GM12878 (cell line): ENCODE measurements at regions of chr1 and their contacts with region 1.

Region 1: DNA sequence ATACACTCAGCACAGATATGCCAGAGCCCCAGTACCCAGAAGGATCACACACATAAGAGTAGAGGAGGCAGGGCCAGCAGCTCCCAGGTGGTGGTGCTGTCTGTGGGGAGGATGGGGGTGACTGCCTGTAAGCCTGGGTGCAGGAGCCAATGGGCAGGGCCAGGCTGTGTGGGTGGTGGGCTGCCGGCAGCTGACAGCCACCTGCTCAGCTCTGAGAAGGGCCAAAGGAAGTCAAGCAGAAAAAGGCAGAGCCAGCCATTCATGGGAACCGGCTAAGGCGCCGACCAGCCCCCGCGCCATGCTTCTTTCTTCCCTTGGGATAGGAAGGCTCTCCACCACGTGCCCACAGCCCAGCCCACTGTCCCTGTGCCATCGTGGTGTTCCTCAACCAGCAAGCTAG is 14.1 kb downstream of the PIK3C2B start:
- DNase-seq: no peak
- ATAC-seq: peak; percentile 81
- H3K4me3 ChIP-seq: no peak overlapping the region
- H3K27ac ChIP-seq: peak overlapping the region; percentile 84
- H3K4me1 ChIP-seq: peaks cover 45% of the 10 kb centered on the region
- H3K27me3 ChIP-seq: no peaks in the 10 kb centered on the region
- CTCF ChIP-seq: peak; percentile 20 to 24 (median 23); a peak in 2 of 6 replicates
- EP300 ChIP-seq: no peak; a peak in 1 of 4 replicates
- POLR2A ChIP-seq: no peak
- RAD21 ChIP-seq: peak; percentile 39; the same call in 1 of the 2 replicates

Region 2: GRCh38 chr1:203609979-203610493 is 870.5 kb before region 1 on chr1:
- CTCF ChIA-PET with region 1: no interaction called
- POLR2A ChIA-PET with region 1: no interaction called
- RAD21 ChIA-PET with region 1: no interaction called
- SMC1A ChIA-PET with region 1: no interaction called
- in situ Hi-C with region 1: no loop called
- intact Hi-C with region 1: no loop called
- DNase-seq: no peak
- ATAC-seq: no peak
- H3K4me3 ChIP-seq: no peak overlapping the region
- H3K27ac ChIP-seq: no peak overlapping the region
- H3K4me1 ChIP-seq: no peaks in the 10 kb centered on the region; the same call in 1 of the 2 replicates
- H3K27me3 ChIP-seq: no peaks in the 10 kb centered on the region
- CTCF ChIP-seq: no peak
- EP300 ChIP-seq: no peak
- POLR2A ChIP-seq: no peak
- RAD21 ChIP-seq: no peak

Region 3: DNA sequence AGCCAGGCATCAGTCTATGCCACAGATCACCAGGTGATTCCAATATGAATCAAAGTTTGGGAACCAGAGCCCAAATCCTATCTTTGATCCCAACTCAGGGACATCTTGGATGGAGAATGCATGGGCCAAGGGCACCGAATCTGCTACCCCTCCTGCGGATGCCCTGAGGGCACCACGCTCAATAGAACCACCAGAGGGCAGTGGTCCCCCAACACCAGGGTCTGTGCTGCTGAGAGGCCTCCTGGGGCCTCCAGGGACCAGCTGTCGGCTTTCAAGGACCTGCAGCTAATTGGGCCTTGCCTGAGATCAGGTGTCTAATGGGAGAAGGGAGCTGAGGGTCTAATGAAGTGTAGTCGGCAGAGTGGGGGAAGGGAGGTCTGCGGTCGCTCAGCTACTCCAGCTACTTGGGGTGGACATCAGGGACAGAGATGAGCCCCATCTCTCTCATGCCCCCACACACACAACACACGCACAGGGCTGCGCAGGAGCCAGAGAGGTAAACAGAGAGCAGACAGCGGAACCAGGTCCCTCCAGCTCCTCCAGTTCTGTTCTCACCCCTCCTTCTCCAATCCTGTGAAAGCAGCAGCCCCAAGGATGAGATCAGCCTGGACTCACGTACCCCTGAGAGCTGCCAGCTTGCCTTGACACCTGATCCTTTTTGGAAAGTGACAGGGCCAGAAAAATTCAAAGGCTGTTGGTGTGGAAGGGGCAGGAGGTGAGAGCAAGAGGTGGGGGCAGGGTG is 34.0 kb before region 1 on chr1:
- CTCF ChIA-PET with region 1: interaction called, 2,021 read pairs
- POLR2A ChIA-PET with region 1: interaction called, 15 read pairs
- RAD21 ChIA-PET with region 1: interaction called, 101 read pairs
- SMC1A ChIA-PET with region 1: interaction called, 112 read pairs
- in situ Hi-C with region 1: no loop called
- intact Hi-C with region 1: loop called (anchors 1 kb)
- DNase-seq: no peak
- ATAC-seq: peak; percentile 98
- H3K4me3 ChIP-seq: no peak overlapping the region
- H3K27ac ChIP-seq: no peak overlapping the region
- H3K4me1 ChIP-seq: peaks cover 5% of the 10 kb centered on the region
- H3K27me3 ChIP-seq: no peaks in the 10 kb centered on the region
- CTCF ChIP-seq: peak; percentile 80 to 92 (median 89); a peak in 5 of 6 replicates
- EP300 ChIP-seq: no peak
- POLR2A ChIP-seq: no peak
- RAD21 ChIP-seq: peak; percentile 99

Region 4: GRCh38 chr1:204453141-204453772 is 27.3 kb before region 1 on chr1:
- CTCF ChIA-PET with region 1: interaction called, 2,021 read pairs
- POLR2A ChIA-PET with region 1: interaction called, 15 read pairs
- RAD21 ChIA-PET with region 1: interaction called, 101 read pairs
- SMC1A ChIA-PET with region 1: interaction called, 112 read pairs
- in situ Hi-C with region 1: no loop called
- intact Hi-C with region 1: no loop called
- DNase-seq: peak; percentile 84
- ATAC-seq: peak; percentile 97
- H3K4me3 ChIP-seq: 0 out of 2 replicates have a peak overlapping the region, but pooled peaks have one; percentile 9
- H3K27ac ChIP-seq: peak overlapping the region; percentile 81
- H3K4me1 ChIP-seq: peaks cover 17% of the 10 kb centered on the region
- H3K27me3 ChIP-seq: no peaks in the 10 kb centered on the region
- CTCF ChIP-seq: no peak
- EP300 ChIP-seq: no peak; a peak in 1 of 4 replicates
- POLR2A ChIP-seq: no peak
- RAD21 ChIP-seq: no peak

Region 5: GRCh38 chr1:204494281-204495077 is 14.0 kb after region 1 on chr1 and contains the start of gene PIK3C2B:
- CTCF ChIA-PET with region 1: interaction called, 471 read pairs
- POLR2A ChIA-PET with region 1: interaction called, 81 read pairs
- RAD21 ChIA-PET with region 1: interaction called, 267 read pairs
- SMC1A ChIA-PET with region 1: interaction called, 408 read pairs
- in situ Hi-C with region 1: no loop called
- intact Hi-C with region 1: loop called (anchors 1 kb)
- DNase-seq: peak; percentile 55
- ATAC-seq: peak; percentile 92
- H3K4me3 ChIP-seq: peak within 1 kb of the TSS; percentile 92
- H3K27ac ChIP-seq: peak within 1 kb of the TSS; percentile 86
- H3K4me1 ChIP-seq: peaks cover 22% of the 10 kb centered on the region
- H3K27me3 ChIP-seq: no peaks in the 10 kb centered on the region
- CTCF ChIP-seq: peak; percentile 37 to 59 (median 43)
- EP300 ChIP-seq: no peak
- POLR2A ChIP-seq: peak; percentile 86
- RAD21 ChIP-seq: peak; percentile 47
- polyA plus RNA-seq, gene PIK3C2B: 2.2 to 5.0 TPM